Aorta (tissue), 5 donors: ENCODE measurements at regions of chr11 and their contacts with region 1.

Region 1: DNA sequence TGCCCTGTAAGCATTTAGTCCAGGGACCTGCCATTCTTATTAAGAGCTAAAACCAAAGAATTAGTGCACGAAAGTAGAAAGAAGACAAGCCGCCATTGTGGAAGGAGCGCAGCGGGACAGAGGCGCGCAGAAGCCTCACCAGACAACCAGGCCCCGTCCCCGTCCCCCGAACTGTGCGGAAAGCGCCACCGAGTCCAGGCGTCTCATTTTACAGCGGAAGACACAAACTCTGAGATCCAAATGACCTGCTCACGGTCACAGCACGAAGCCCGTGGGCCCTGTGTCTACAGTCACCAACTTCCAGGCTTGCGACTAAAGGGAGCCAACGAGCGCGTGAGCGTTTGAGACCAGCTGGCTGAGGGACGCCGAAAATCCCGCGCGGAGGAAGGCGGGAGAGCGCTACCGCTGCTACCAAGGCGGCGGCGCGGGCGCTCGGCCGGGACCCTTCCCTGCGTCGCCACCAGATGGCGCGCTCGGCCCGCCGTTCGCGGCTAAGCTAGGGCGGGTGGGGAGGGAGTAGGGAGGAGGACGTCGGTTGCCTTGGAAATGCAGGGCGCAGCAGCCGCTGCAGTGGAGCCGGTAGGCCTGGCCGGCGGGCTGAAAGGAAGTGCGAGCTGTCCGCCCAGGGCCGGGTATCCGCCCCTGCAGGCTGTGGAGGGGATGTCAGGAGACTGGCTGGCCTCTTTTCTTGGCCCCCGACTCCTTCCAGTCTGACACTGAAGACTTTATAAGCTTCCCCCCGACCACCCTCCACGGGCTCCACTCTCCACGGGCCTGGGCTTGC is 434 bp upstream of the CCDC83 start:
- DNase-seq: peak; percentile 95 to 97
- ATAC-seq: peak; percentile 100
- H3K4me3 ChIP-seq: peak overlapping the region; percentile 31 to 51
- H3K27ac ChIP-seq: peak overlapping the region in 1 of 2 donors; percentile 69
- H3K4me1 ChIP-seq: no peaks in the 10 kb centered on the region
- H3K27me3 ChIP-seq: no peaks in the 10 kb centered on the region

Region 2: DNA sequence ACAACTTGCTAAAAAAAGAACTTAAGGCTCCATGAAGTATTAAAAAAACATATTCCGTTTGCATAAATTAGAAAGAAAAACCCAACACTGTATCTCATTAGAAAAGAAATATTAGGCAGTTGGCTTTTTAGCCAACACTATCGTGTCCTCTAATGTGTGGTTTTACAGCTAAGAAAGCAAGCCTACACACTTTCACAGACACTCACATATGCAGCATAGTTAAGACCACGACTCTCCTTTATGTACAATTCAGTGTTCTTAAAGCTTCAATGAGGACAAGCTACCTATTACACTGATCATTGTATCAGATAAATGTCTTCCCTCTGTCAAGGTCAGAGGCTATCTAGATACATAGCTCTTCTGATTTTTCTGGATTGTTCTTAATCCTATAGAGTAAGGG is 134.0 kb after region 1 on chr11:
- intact Hi-C with region 1: no loop called
- DNase-seq: no peak
- ATAC-seq: no peak
- H3K4me3 ChIP-seq: no peak overlapping the region
- H3K27ac ChIP-seq: no peak overlapping the region
- H3K4me1 ChIP-seq: peaks cover 0 to 4% of the 10 kb centered on the region in 2 donors
- H3K27me3 ChIP-seq: no peaks in the 10 kb centered on the region

Region 3: GRCh38 chr11:86218125-86219084 is 363.7 kb after region 1 on chr11:
- intact Hi-C with region 1: loop called (anchors 5 to 10 kb)
- DNase-seq: peak; percentile 78 to 84
- ATAC-seq: peak; percentile 89
- H3K4me3 ChIP-seq: peak overlapping the region; percentile 11 to 66
- H3K27ac ChIP-seq: peak overlapping the region in 1 of 2 donors; percentile 25
- H3K4me1 ChIP-seq: peaks cover 0 to 2% of the 10 kb centered on the region in 2 donors
- H3K27me3 ChIP-seq: peaks cover 0 to 1% of the 10 kb centered on the region in 2 donors

Region 4: GRCh38 chr11:86291466-86292262 is 436.9 kb after region 1 on chr11:
- intact Hi-C with region 1: loop called (anchors 5 to 10 kb)
- DNase-seq: peak in 1 of 2 donors; percentile 56
- ATAC-seq: peak; percentile 50
- H3K4me3 ChIP-seq: no peak overlapping the region
- H3K27ac ChIP-seq: no peak overlapping the region
- H3K4me1 ChIP-seq: no peaks in the 10 kb centered on the region
- H3K27me3 ChIP-seq: no peaks in the 10 kb centered on the region

Region 5: DNA sequence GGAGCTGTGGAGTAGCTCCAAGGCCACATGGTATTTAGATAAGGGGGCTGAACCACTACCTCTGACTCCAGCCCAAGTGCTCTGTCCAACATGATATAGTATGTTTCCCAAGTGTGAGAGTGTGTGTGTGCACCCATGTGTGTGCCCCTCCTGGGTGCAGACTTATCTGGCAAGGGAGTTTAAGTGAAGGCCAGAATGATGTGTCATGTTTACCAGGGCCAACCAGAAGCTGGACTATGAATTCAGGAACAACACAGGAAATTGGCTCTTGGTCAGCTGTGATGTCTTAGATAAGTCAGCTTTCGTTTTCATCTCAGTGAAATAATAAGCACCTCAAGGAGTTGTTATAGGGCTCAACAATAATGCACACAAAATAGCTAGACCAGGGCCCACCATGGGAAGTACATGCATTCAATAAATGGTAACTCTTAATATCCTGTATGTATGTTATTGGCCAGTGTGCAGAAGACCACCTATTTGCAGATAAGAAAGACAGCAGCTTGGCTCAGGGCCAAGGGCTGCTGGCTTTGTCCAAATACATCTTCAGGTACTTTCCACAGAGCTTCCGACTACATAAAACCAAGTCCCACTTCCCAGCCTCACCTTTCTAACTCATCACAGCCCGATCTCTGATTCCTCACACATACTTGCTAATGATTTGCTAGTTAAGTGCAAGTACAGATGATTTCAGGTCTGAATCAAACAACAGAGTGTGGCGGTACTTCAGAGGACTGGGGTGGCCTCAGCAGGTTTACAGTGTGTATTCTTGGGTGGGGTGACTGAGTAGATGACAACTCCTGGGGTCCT is 696.7 kb after region 1 on chr11:
- intact Hi-C with region 1: no loop called
- DNase-seq: no peak
- ATAC-seq: peak; percentile 20
- H3K4me3 ChIP-seq: no peak overlapping the region
- H3K27ac ChIP-seq: peak overlapping the region in 1 of 2 donors; percentile 83
- H3K4me1 ChIP-seq: peaks cover 10 to 15% of the 10 kb centered on the region in 2 donors
- H3K27me3 ChIP-seq: no peaks in the 10 kb centered on the region